ENCODE measurements at regions of chr2 and their contacts with region 1.

Region 1: GRCh38 chr2:197293252-197294007 is 17.1 kb downstream of the ANKRD44 start:
- DNase-seq: peak; percentile 41 to 79 (median 43)
- H3K4me3 ChIP-seq: peak overlapping the region in 1 of 2 donors; percentile 15
- H3K4me3 Mint-ChIP-seq: peak overlapping the region; percentile 77 to 87 (median 82)
- H3K27ac ChIP-seq: peak overlapping the region; percentile 69
- H3K27ac Mint-ChIP-seq: peak overlapping the region; percentile 90 to 99 (median 96)
- H3K4me1 ChIP-seq: peaks cover 100% of the 10 kb centered on the region
- H3K4me1 Mint-ChIP-seq: peaks cover 69 to 94% (median 84%) of the 10 kb centered on the region in 4 donors
- H3K27me3 ChIP-seq: no peaks in the 10 kb centered on the region
- H3K27me3 Mint-ChIP-seq: no peaks in the 10 kb centered on the region

Region 2: DNA sequence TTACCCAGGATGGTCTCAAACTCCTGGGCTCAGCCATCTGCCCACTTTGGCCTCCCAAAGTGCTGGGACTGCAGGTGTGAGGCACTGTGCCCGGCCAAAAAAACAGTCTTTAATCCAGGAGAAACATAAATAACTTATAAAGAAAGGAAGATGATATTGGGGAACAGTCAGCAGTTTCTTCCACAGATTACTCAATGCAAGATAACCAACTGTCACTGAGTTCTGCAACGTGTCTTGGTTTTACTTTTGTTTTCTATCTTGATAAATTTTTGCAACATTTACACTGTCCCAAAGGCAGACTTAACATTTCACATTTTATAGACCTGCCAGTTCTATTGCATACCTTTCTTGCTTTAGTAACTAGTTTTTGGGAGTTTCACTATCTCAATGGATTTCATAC is 54.0 kb before region 1 on chr2:
- CTCF ChIA-PET with region 1: interaction called, 5 read pairs
- POLR2A ChIA-PET with region 1: interaction called, 606 read pairs
- intact Hi-C with region 1: loop called (anchors 2 kb)
- DNase-seq: no peak
- H3K4me3 ChIP-seq: peak overlapping the region in 1 of 2 donors; percentile 52
- H3K4me3 Mint-ChIP-seq: peak overlapping the region; percentile 80 to 96 (median 87)
- H3K27ac ChIP-seq: peak overlapping the region; percentile 66
- H3K27ac Mint-ChIP-seq: peak overlapping the region; percentile 87 to 99 (median 95)
- H3K4me1 ChIP-seq: peaks cover 97% of the 10 kb centered on the region
- H3K4me1 Mint-ChIP-seq: peaks cover 70 to 93% (median 78%) of the 10 kb centered on the region in 4 donors
- H3K27me3 ChIP-seq: no peaks in the 10 kb centered on the region
- H3K27me3 Mint-ChIP-seq: no peaks in the 10 kb centered on the region

Region 3: DNA sequence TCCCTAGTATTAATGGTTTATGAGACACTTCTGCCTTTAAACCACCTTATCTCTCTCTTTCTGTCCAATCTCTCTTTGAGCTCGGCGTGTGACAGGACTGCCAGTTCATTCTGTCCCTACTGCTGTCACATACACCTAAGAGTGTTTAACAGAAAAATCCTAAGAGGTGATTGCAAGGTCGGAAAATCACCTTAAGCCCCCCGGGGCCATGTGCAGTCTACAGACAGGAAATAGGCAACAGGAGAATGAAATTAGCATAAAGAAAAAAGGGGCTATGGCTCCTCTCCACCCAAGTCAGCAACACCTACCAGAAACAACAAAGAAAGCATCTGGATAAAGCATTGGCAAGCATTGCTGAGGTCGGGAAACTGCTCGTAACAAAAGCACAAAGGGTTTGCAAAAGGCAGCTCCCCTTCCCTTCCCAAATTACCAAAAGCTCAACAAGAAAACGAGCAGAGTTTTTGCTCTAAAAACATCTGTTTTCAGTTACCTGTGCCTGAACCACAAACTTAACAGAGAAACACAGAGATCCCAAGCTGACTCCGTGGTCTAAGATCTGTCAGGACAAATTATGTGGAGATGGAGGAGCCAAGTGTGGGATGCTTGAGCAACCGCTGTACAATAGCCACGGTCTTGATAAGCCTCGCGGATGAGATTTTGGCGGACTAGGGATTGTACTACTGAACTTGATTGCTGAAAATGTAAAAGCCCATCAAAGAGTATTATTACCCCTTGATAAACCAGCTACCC is 13.3 kb before region 1 on chr2:
- CTCF ChIA-PET with region 1: interaction called, 3 read pairs
- POLR2A ChIA-PET with region 1: interaction called, 8 read pairs
- intact Hi-C with region 1: loop called (anchors 1 kb)
- DNase-seq: no peak
- H3K4me3 ChIP-seq: peak overlapping the region in 1 of 2 donors; percentile 6
- H3K4me3 Mint-ChIP-seq: peak overlapping the region; percentile 27 to 83 (median 74)
- H3K27ac ChIP-seq: peak overlapping the region; percentile 19
- H3K27ac Mint-ChIP-seq: peak overlapping the region; percentile 70 to 95 (median 87)
- H3K4me1 ChIP-seq: peaks cover 95% of the 10 kb centered on the region
- H3K4me1 Mint-ChIP-seq: peaks cover 63 to 90% (median 75%) of the 10 kb centered on the region in 4 donors
- H3K27me3 ChIP-seq: no peaks in the 10 kb centered on the region
- H3K27me3 Mint-ChIP-seq: no peaks in the 10 kb centered on the region

Region 4: GRCh38 chr2:197304556-197305011 is 11.2 kb after region 1 on chr2:
- CTCF ChIA-PET with region 1: interaction called, 39 read pairs
- POLR2A ChIA-PET with region 1: interaction called, 265 read pairs
- intact Hi-C with region 1: loop called (anchors 1 kb)
- DNase-seq: peak in 1 of 5 donors; percentile 34
- H3K4me3 ChIP-seq: peak overlapping the region; percentile 0 to 43
- H3K4me3 Mint-ChIP-seq: peak overlapping the region; percentile 82 to 97 (median 95)
- H3K27ac ChIP-seq: peak overlapping the region; percentile 64
- H3K27ac Mint-ChIP-seq: peak overlapping the region; percentile 93 to 95 (median 94)
- H3K4me1 ChIP-seq: peaks cover 87% of the 10 kb centered on the region
- H3K4me1 Mint-ChIP-seq: peaks cover 65 to 92% (median 71%) of the 10 kb centered on the region in 4 donors
- H3K27me3 ChIP-seq: no peaks in the 10 kb centered on the region
- H3K27me3 Mint-ChIP-seq: no peaks in the 10 kb centered on the region

Measured in CD4-positive, alpha-beta memory T cell (primary cell).